Motor neuron (in vitro differentiated cells): ENCODE measurements at regions of chr5 and their contacts with region 1.

Region 1: GRCh38 chr5:36690041-36690961 is 83.9 kb downstream of the SLC1A3 start:
- ATAC-seq: peak; percentile 86 to 96 (median 90)
- H3K4me3 ChIP-seq: peak overlapping the region; percentile 37 to 52 (median 42)
- H3K27ac ChIP-seq: peak overlapping the region; percentile 57 to 79
- H3K4me1 ChIP-seq: peaks cover 0 to 2% of the 10 kb centered on the region in 2 donors

Region 2: GRCh38 chr5:36403632-36404311 is 286.5 kb before region 1 on chr5:
- in situ Hi-C with region 1: loop called in 4 of 9 experiments (anchors 10 to 25 kb)
- ATAC-seq: peak in 2 of 8 experiments; percentile 42 to 75
- H3K4me3 ChIP-seq: no peak overlapping the region
- H3K27ac ChIP-seq: no peak overlapping the region
- H3K4me1 ChIP-seq: no peaks in the 10 kb centered on the region

Region 3: GRCh38 chr5:36507332-36507952 is 182.9 kb before region 1 on chr5:
- in situ Hi-C with region 1: loop called in 1 of 9 experiments (anchors 25 kb)
- ATAC-seq: peak in 3 of 8 experiments; percentile 52 to 71 (median 58)
- H3K4me3 ChIP-seq: no peak overlapping the region
- H3K27ac ChIP-seq: no peak overlapping the region
- H3K4me1 ChIP-seq: no peaks in the 10 kb centered on the region

Region 4: DNA sequence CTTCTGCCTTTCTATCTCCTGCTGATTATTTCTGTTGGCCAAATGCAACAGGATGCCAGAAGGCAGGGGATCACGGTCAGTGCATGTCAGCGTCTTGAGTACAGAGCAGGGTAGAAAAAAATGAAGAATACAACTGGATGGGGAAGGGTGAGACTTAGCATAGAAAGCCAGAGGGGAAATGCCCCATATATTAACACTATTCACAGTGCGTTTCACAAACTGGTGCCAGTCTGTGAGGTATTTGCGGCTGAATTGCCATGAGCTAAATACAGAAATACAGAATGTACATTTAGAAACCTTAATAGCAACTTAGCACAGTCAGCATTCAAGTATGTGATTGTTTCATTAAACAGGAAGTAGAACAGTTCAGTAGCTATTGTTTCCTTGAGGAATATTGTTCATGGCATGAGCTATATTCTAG is 114.9 kb before region 1 on chr5:
- in situ Hi-C with region 1: loop called in 1 of 9 experiments (anchors 25 kb)
- ATAC-seq: no peak
- H3K4me3 ChIP-seq: no peak overlapping the region
- H3K27ac ChIP-seq: no peak overlapping the region
- H3K4me1 ChIP-seq: peaks cover 0 to 2% of the 10 kb centered on the region in 2 donors